PC-9 (cell line): ENCODE measurements at regions of chr1 and their contacts with region 1.

Region 1: GRCh38 chr1:35030756-35031446 is 844 bp downstream of the ZMYM6 start:
- DNase-seq: peak; percentile 32 to 38
- H3K4me3 ChIP-seq: peak overlapping the region; percentile 86
- H3K27ac ChIP-seq: peak overlapping the region; percentile 82
- H3K4me1 ChIP-seq: peaks cover 21% of the 10 kb centered on the region
- H3K27me3 ChIP-seq: no peaks in the 10 kb centered on the region
- CTCF ChIP-seq: no peak

Region 2: DNA sequence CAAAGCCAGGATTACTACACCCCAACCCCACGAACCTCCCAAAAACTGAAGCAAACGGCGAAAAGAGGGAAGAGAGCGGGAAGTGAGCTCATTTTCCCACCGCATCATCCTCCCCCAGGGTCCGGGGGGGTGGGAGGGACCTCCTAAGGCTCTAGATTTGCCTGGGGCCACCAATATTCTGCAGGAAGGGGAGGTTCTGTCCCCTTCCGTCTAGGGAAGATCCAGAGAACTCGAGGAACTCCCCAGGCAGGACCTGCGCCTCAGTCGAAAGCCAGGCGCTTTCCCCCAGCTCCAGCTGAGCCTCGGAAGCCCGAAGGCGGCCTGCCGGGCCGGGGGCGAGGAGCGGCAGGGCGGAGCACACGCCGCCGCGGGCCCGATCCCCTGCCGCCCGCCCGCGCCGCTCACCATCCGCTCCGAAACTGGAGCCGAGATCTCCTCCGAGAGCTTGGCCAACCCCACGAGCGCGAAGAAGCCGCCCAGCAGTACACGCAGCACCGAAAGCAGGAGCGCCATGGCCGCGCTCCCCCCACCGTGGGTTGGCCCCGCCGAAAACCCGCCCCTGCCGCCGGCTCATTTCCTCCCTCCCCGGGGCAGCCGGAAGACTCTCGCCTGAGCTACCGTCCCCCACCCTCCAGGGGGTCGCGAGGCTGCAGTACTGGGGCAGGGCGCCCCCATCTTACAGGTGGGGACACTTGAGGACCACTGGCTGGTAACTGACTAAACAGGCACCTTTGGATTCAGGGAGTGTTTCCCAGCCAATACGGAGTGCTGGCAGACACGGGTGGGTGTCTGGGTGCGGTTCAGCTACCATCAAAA is 45.9 kb before region 1 on chr1 and contains the start of gene TMEM35B:
- CTCF ChIA-PET with region 1: no interaction called
- POLR2A ChIA-PET with region 1: interaction called, 8 read pairs
- intact Hi-C with region 1: loop called (anchors 2 kb)
- DNase-seq: peak in 1 of 2 experiments; percentile 64
- H3K4me3 ChIP-seq: peak within 1 kb of the TSS; percentile 71
- H3K27ac ChIP-seq: no peak within 1 kb of the TSS
- H3K4me1 ChIP-seq: no peaks in the 10 kb centered on the region; the same call in 1 of the 2 replicates
- H3K27me3 ChIP-seq: no peaks in the 10 kb centered on the region
- CTCF ChIP-seq: no peak
- total RNA-seq, gene TMEM35B: 39.8 and 41.7 TPM in 2 replicates

Region 3: DNA sequence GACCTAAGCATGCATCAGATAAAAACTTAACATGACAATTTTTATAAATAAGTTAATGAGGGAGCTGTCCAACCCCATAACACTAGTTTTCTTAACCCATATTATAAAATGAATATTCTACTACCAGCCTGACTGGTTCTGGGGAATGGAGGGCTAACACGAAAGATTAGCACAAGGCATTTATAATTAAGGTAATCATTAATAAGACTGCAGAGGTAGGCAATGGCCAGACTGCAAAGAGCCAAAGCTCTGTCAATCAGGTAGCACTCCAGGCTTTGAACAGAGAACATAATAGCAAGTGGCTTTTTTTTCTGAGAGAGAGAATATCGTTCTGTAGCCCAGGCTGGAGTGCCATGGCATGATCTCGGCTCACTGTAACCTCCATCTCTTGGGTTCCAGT is 25.2 kb before region 1 on chr1:
- CTCF ChIA-PET with region 1: no interaction called
- POLR2A ChIA-PET with region 1: interaction called, 12 read pairs
- intact Hi-C with region 1: no loop called
- DNase-seq: no peak
- H3K4me3 ChIP-seq: no peak overlapping the region
- H3K27ac ChIP-seq: no peak overlapping the region
- H3K4me1 ChIP-seq: no peaks in the 10 kb centered on the region
- H3K27me3 ChIP-seq: no peaks in the 10 kb centered on the region
- CTCF ChIP-seq: no peak

Region 4: GRCh38 chr1:35079003-35079930 is 48.4 kb after region 1 on chr1 and contains the start of gene ZMYM1:
- CTCF ChIA-PET with region 1: interaction called, 3 read pairs
- POLR2A ChIA-PET with region 1: interaction called, 32 read pairs
- intact Hi-C with region 1: loop called (anchors 1 kb)
- DNase-seq: peak; percentile 80 to 84
- H3K4me3 ChIP-seq: peak within 1 kb of the TSS; percentile 83
- H3K27ac ChIP-seq: peak within 1 kb of the TSS; percentile 88
- H3K4me1 ChIP-seq: peaks cover 19% of the 10 kb centered on the region
- H3K27me3 ChIP-seq: no peaks in the 10 kb centered on the region
- CTCF ChIP-seq: no peak
- total RNA-seq, gene ZMYM1: 31.9 and 49.7 TPM in 2 replicates

Region 5: DNA sequence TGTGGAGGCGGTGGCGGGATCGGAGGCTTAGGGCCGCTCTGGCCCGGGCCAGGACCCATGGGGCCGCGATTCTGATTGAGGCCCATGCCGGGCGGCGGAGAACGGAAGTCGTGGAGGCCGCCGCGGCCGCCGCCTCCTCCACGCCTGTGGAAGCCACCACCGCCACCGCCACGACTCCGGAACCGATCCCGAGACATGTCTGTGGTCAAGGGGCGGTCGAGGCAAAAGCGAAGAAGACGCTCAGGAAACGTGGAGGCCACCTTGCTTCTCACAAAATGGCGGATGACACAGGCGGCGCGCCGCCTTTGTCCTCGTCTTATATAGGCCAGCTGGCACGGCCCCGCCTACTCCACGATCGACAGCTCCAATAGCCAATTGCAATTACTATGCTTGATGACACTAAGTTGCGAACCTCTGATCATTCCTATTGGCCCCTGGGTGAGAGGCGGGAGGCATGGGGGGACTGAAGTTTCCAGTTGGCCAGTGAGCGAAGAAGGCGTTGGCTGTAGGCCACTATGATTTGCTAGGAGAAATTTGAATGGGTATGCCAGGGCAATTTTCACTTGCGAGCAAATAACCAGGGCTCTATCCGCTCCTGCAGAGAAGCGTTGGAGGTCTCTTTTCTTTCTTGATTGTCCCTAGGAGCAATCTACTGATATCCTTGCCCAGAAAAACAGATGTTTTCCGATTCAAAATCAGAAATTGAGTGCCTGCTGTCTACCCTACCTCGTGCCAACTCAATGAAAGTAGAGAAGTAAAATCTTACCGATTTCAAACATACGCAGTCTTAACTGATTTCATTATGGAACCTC is 162.2 kb after region 1 on chr1 and contains the start of gene SFPQ:
- CTCF ChIA-PET with region 1: no interaction called
- POLR2A ChIA-PET with region 1: no interaction called
- intact Hi-C with region 1: loop called (anchors 5 kb)
- DNase-seq: peak; percentile 96 to 99
- H3K4me3 ChIP-seq: peak within 1 kb of the TSS; percentile 98
- H3K27ac ChIP-seq: peak within 1 kb of the TSS; percentile 72
- H3K4me1 ChIP-seq: peaks cover 21% of the 10 kb centered on the region
- H3K27me3 ChIP-seq: no peaks in the 10 kb centered on the region
- CTCF ChIP-seq: no peak
- total RNA-seq, gene SFPQ: 191 and 299 TPM in 2 replicates

Region 6: DNA sequence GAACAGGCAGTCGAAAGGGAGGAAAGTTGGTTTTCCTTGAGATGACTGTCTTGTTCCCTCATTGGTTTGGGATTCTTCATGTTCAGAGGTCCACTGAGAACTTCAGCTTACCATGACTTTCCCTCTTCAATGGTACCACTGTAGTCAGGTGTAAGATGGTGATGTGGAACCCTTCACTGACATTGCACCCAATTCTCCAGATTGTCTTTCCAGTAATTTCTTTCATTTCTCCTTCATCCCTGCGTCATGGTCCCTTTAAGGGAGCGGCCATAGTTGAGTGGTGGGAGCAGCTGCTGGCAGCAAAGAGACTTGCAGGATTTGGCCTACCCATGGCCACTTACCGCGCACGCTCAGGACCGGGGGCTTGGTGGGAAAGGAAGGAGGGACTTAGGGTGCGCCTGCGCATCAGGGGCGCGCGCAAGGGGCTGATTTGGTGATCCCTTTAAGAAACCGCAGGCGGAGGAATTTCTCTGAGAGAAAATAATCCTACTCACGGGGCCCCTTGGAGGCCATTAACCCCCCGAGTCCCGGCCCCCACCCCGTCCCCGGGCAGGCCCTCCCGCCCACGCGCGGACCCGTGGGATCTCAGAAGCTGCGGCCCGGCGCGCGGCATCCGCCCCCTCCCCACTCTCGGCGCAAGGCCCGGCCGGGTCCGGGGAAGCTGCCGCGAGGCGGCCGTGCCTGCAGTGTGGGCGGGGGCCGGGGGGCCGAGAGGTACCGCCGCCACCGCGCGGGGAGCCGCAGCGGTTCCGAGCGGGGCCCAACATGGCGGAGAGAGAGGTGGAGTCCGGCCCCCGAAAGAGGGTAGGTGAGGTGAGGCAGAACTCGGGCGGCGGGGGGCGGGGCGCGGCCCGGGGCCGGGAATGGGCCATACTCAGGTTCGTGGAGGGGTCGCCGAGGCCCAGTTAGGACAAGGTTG is 237.6 kb after region 1 on chr1 and contains the start of gene ZMYM4:
- CTCF ChIA-PET with region 1: interaction called, 3 read pairs
- POLR2A ChIA-PET with region 1: interaction called, 11 read pairs
- intact Hi-C with region 1: no loop called
- DNase-seq: peak; percentile 92 to 95
- H3K4me3 ChIP-seq: peak within 1 kb of the TSS; percentile 71
- H3K27ac ChIP-seq: peak within 1 kb of the TSS; percentile 71
- H3K4me1 ChIP-seq: peaks cover 35% of the 10 kb centered on the region
- H3K27me3 ChIP-seq: no peaks in the 10 kb centered on the region
- CTCF ChIP-seq: no peak
- total RNA-seq, gene ZMYM4: 55.6 and 84.4 TPM in 2 replicates

Region 7: DNA sequence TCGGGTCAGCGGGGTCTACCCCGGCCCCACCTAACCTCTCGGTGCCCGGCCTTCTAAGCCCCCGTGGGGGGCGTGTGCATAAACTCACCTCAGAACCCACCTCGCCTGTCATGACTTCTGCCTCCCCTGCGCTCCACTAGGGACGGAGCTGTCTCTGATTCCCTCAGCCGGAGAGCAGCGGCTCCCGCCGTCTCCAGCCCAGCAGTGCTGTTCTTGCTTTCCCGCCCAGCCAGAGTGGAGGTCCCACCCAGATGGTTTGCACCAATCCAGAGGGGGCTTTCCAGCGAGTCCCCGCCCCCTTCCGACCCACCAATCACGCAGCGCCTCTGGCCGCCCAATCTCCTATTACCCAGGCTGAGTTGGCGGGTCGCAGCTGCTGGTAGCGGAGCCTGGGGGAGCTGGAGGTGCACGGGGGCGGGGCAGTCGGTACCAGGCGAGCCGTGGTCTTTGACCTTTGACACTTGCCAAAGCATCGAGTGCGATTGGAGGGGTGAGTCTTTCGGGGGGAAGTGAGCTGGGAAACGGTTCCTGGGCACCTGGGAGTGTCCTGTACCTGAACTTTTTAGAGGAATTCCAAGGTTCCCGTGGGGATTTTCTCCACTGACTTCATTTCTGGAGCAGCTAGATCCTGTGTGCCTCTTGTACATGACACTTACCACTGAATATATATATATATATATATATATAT is 739.0 kb after region 1 on chr1 and contains the start of gene CLSPN:
- CTCF ChIA-PET with region 1: no interaction called
- POLR2A ChIA-PET with region 1: interaction called, 18 read pairs
- intact Hi-C with region 1: no loop called
- DNase-seq: peak; percentile 90 to 98
- H3K4me3 ChIP-seq: peak within 1 kb of the TSS; percentile 99
- H3K27ac ChIP-seq: no peak within 1 kb of the TSS
- H3K4me1 ChIP-seq: peaks cover 5% of the 10 kb centered on the region; the same call in 1 of the 2 replicates
- H3K27me3 ChIP-seq: no peaks in the 10 kb centered on the region
- CTCF ChIP-seq: no peak
- total RNA-seq, gene CLSPN: 18.9 and 26.7 TPM in 2 replicates